HEK293 (cell line): ENCODE measurements at regions of chr5 and their contacts with region 1.

Region 1: DNA sequence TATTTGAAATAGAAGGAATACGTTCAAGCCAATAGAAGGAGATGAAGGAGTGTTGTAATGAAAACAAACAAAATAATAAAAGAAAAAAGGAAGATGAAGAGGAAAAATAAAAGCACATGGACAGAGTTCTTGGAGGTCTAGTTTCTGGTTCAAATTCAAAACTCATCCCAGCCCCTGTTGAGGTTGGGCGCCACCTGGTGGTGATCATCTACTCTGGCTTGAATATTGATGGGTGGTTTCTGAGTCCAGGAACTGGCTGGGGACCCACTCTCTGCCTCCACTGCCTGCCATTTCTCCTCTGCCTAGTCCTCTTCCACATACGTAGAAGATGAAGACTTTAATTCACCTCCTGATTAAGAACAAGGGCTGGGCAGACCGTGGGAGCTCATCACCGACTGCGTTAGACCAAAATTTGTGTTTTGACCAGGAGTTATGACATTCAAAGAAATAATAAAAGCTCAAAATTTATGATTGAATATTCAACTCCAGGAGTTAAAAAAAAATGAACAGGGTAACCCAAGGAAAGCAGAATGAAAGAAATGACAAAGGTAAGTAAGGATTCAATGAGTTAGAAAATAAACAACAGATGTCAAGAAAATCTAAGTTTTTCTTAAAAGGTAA is 99.0 kb upstream of the SLC1A3 start:
- H3K4me3 ChIP-seq: no peak overlapping the region
- H3K27ac ChIP-seq: no peak overlapping the region
- H3K4me1 ChIP-seq: peaks cover 5% of the 10 kb centered on the region; the same call in 1 of the 2 replicates
- CTCF ChIP-seq: peak; percentile 60

Region 2: GRCh38 chr5:36414869-36415282 is 92.6 kb before region 1 on chr5:
- CTCF ChIA-PET with region 1: interaction called, 247 read pairs
- POLR2A ChIA-PET with region 1: interaction called, 4 read pairs
- H3K4me3 ChIP-seq: no peak overlapping the region
- H3K27ac ChIP-seq: no peak overlapping the region
- H3K4me1 ChIP-seq: no peaks in the 10 kb centered on the region
- CTCF ChIP-seq: peak; percentile 71

Region 3: DNA sequence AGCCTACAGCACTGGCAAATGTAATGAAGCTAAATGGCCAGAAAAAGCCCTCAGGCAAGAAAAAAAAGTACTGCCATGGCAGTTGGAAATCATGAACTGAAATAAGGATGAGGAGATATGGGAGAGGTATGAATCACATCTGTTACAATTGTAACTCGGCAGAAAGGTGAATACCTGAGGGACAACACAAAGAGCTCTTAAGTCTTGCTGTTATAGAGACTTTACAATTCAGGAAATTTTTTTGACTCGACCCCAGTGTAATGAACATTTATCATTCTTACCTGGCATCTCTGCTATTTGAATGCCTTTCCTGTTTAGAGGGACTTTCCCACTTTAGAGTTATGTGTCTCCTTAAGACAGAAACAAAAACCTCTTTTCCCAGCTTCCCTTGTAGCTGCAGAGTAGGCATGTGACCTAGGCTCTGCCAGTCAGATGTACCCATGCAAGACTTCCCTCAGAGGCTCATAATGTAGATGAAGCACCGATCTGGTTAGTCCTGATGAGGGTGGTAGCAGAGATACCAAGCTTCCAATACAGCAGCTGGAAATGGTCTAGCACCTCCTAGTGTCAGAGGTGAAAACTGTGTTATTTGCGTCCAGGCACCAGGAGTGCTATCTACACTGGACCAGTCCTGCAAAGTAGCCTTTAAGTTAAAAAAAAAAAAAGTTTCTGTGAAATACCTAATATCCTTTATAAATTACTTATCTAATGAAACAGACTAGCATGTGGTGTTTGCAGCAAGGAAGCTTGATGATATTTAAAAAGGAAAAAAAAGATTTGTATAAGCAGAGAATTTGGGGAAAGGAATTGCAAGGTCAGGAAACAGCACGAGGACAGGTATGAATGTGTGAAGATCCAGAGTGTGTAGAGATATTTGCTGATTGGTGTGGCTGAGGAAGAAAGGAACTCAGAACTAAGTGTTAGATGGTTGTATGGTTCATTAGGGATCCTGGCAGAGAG is 48.0 kb before region 1 on chr5:
- CTCF ChIA-PET with region 1: interaction called, 19 read pairs
- POLR2A ChIA-PET with region 1: interaction called, 3 read pairs
- H3K4me3 ChIP-seq: no peak overlapping the region
- H3K27ac ChIP-seq: no peak overlapping the region
- H3K4me1 ChIP-seq: no peaks in the 10 kb centered on the region
- CTCF ChIP-seq: peak; percentile 18; the same call in 1 of the 2 replicates

Region 4: DNA sequence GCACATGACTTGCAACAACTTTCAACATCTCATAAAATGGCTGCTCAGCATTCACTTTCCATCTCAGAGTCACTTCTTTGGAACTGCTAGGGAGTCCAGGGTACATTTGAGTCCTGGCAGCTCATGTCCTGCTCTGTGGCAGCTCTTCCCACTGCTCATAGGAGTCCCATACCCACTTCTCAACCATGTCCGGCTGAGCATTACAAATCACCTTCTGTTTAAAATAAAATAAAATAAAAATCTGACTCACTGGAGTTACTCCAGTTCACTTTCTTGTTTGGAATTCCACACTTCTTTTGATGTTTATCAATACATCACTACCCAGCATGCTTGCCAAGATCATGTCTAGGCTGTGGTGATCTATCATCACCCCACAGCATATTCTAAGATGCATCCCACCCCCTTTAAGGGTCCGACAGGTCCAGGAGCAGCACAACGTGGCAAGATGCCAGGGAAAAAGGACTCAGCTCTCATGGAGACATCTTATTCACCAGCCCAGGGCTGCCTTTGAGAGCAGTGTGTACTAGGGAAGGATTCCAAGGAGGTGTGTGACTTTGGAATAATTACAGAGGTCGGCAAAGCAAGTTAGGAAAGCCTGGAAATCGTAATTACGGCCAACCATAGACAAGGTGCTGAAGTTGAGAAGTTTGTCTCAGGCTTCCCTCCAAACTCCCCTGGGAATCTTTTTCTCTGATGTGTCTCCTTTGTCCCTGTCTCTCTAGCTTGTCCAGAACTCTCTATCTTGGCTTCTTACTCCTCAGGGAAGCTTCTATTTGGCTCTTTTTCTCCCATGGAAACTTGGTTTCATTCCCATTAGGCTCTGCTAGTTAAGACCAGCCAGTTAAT is 12.5 kb before region 1 on chr5:
- CTCF ChIA-PET with region 1: interaction called, 69 read pairs
- POLR2A ChIA-PET with region 1: no interaction called
- H3K4me3 ChIP-seq: no peak overlapping the region
- H3K27ac ChIP-seq: no peak overlapping the region
- H3K4me1 ChIP-seq: no peaks in the 10 kb centered on the region
- CTCF ChIP-seq: no peak

Region 5: GRCh38 chr5:36695677-36696673 is 188.5 kb after region 1 on chr5:
- CTCF ChIA-PET with region 1: interaction called, 84 read pairs
- POLR2A ChIA-PET with region 1: no interaction called
- H3K4me3 ChIP-seq: no peak overlapping the region
- H3K27ac ChIP-seq: no peak overlapping the region
- H3K4me1 ChIP-seq: no peaks in the 10 kb centered on the region
- CTCF ChIP-seq: peak; percentile 68